Right cardiac atrium (tissue), 5 donors: ENCODE measurements at regions of chr2 and their contacts with region 1.

Region 1: GRCh38 chr2:221573430-221574230 is 1.5 kb upstream of the EPHA4 start:
- DNase-seq: peak; percentile 86 to 94 (median 94)
- ATAC-seq: peak; percentile 86
- H3K4me3 ChIP-seq: peak overlapping the region; percentile 96
- H3K27ac ChIP-seq: peak overlapping the region; percentile 51
- H3K4me1 ChIP-seq: peaks cover 2% of the 10 kb centered on the region
- H3K27me3 ChIP-seq: no peaks in the 10 kb centered on the region

Region 2: DNA sequence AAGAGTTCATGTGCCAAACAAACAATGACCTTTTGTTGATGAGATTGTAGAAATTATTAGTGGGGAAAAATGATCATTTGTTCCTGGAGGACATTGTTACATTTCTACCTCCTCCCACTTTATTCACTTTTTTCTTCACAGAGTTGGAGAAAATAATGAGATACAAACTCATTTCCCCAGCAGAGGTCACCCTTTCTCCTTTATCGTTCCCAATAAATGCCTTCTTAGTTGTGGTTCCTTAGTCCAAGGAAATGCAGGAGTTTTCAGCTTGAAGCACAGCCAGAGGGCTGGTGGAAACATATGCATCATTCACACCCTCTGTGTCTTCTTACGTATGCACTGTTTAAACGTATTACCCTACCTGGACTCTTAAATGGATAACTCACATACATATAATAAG is 1837.4 kb before region 1 on chr2:
- intact Hi-C with region 1: loop called in 2 of 4 experiments (anchors 5 kb)
- DNase-seq: no peak
- ATAC-seq: peak; percentile 60 to 65
- H3K4me3 ChIP-seq: no peak overlapping the region
- H3K27ac ChIP-seq: no peak overlapping the region
- H3K4me1 ChIP-seq: no peaks in the 10 kb centered on the region
- H3K27me3 ChIP-seq: no peaks in the 10 kb centered on the region

Region 3: DNA sequence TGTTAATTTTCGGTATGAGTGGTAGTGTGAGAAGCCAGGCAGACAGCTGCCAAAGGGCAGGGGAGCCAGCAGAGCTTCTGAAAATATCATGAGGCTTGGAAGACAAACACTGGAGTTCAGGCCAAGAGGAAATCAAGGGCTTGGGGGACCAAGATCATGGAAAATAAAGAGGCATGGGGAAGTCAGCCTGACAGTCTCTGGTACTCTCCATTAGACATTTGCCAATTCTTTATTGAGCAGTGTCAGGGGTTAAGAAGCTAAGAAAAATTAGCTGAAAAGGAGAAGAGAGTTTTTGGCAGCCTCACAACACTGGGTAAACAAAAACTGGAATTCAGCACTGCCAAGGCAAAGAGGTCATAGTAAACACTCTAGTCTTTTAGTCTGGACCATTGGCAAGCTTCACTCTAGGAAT is 614.2 kb before region 1 on chr2:
- intact Hi-C with region 1: loop called in 1 of 4 experiments (anchors 5 kb)
- DNase-seq: peak; percentile 36 to 88 (median 76)
- ATAC-seq: peak; percentile 90
- H3K4me3 ChIP-seq: no peak overlapping the region
- H3K27ac ChIP-seq: peak overlapping the region; percentile 72
- H3K4me1 ChIP-seq: peaks cover 5% of the 10 kb centered on the region
- H3K27me3 ChIP-seq: no peaks in the 10 kb centered on the region

Region 4: GRCh38 chr2:221235941-221236340 is 337.7 kb before region 1 on chr2:
- intact Hi-C with region 1: loop called in 1 of 4 experiments (anchors 10 kb)
- DNase-seq: no peak
- ATAC-seq: peak; percentile 38 to 90
- H3K4me3 ChIP-seq: no peak overlapping the region
- H3K27ac ChIP-seq: no peak overlapping the region
- H3K4me1 ChIP-seq: no peaks in the 10 kb centered on the region
- H3K27me3 ChIP-seq: no peaks in the 10 kb centered on the region

Region 5: DNA sequence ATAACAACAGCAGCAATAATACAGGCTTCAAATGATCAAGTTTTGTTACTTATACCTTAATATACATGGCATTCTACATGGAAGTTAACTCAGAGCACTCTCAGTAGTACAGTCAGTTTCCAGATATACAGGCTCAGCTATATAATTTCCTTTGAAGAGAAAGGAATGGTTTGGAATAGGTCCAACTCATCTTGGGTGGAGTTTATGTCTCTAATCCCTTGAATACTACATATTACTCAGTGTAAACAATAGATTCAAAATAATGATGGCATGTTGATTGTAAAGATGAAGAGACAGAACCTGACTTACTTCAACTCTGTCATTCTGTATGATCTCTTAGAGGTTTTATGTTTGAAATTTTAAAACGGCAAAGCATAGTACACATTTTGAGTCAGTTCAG is 176.4 kb before region 1 on chr2:
- intact Hi-C with region 1: no loop called
- DNase-seq: no peak
- ATAC-seq: no peak
- H3K4me3 ChIP-seq: no peak overlapping the region
- H3K27ac ChIP-seq: no peak overlapping the region
- H3K4me1 ChIP-seq: no peaks in the 10 kb centered on the region
- H3K27me3 ChIP-seq: no peaks in the 10 kb centered on the region

Region 6: GRCh38 chr2:221455214-221455613 is 118.4 kb before region 1 on chr2:
- intact Hi-C with region 1: loop called in 1 of 4 experiments (anchors 10 kb)
- DNase-seq: no peak
- ATAC-seq: peak in 1 of 2 donors; percentile 70
- H3K4me3 ChIP-seq: no peak overlapping the region
- H3K27ac ChIP-seq: no peak overlapping the region
- H3K4me1 ChIP-seq: peaks cover 7% of the 10 kb centered on the region
- H3K27me3 ChIP-seq: no peaks in the 10 kb centered on the region

Region 7: GRCh38 chr2:221541131-221541735 is 32.4 kb before region 1 on chr2:
- intact Hi-C with region 1: no loop called
- DNase-seq: no peak
- ATAC-seq: no peak
- H3K4me3 ChIP-seq: no peak overlapping the region
- H3K27ac ChIP-seq: no peak overlapping the region
- H3K4me1 ChIP-seq: peaks cover 4% of the 10 kb centered on the region
- H3K27me3 ChIP-seq: no peaks in the 10 kb centered on the region

Region 8: GRCh38 chr2:221705185-221705877 is 131.7 kb after region 1 on chr2:
- intact Hi-C with region 1: no loop called
- DNase-seq: no peak
- ATAC-seq: no peak
- H3K4me3 ChIP-seq: no peak overlapping the region
- H3K27ac ChIP-seq: no peak overlapping the region
- H3K4me1 ChIP-seq: no peaks in the 10 kb centered on the region
- H3K27me3 ChIP-seq: no peaks in the 10 kb centered on the region